Heart right ventricle (tissue), 16 donors: ENCODE measurements at regions of chr1 and their contacts with region 1.

Region 1: GRCh38 chr1:10253755-10254154 is 43.4 kb downstream of the KIF1B start:
- DNase-seq: peak in 1 of 2 donors; percentile 41
- ATAC-seq: peak; percentile 73 to 96 (median 90)
- H3K4me3 ChIP-seq: no peak overlapping the region
- H3K27ac ChIP-seq: peak overlapping the region; percentile 2 to 72 (median 54)
- H3K4me1 ChIP-seq: peaks cover 0 to 67% (median 56%) of the 10 kb centered on the region in 9 donors
- H3K27me3 ChIP-seq: no peaks in the 10 kb centered on the region
- CTCF ChIP-seq: no peak

Region 2: DNA sequence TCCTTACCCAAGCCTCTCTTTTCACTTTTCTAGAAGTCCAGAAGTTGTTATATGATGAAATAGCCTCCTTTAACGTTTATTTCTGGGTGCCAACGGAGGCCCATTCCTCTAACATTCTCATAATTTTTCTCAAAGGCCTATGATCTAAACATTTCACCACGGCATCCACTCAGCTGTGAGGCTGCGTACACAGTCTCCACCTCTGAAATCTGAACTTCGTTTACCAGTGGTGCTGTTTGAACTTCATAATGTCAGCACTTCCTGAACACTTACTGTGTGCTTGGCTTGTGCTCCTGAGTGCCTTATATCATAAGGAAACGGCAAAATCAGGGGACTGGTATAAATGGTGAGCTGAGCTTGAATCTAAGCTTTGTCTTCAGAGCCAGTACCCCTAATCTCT is 268.8 kb before region 1 on chr1:
- intact Hi-C with region 1: no loop called
- DNase-seq: no peak
- ATAC-seq: peak in 2 of 8 donors; percentile 18 to 48
- H3K4me3 ChIP-seq: no peak overlapping the region
- H3K27ac ChIP-seq: peak overlapping the region in 8 of 10 donors; percentile 40 to 75 (median 50)
- H3K4me1 ChIP-seq: peaks cover 0 to 16% (median 5%) of the 10 kb centered on the region in 9 donors
- H3K27me3 ChIP-seq: no peaks in the 10 kb centered on the region
- CTCF ChIP-seq: no peak

Region 3: DNA sequence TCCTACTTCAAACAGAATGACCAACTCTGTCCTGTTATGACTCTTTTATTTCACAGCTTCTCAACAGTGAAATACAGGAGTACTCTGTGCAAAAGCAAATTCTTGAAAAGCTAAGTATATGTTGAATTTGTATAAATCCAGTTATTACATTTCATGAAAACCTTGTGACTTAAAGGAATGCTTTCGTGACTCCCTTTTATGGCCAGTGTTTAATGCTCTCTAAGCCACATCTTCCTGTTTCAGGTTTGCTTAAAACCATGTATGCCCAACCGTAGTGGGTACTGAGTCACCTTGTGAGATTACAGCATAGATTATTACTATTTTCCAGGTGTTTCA is 83.5 kb before region 1 on chr1:
- intact Hi-C with region 1: no loop called
- DNase-seq: no peak
- ATAC-seq: no peak
- H3K4me3 ChIP-seq: no peak overlapping the region
- H3K27ac ChIP-seq: no peak overlapping the region
- H3K4me1 ChIP-seq: peaks cover 0 to 5% (median 0%) of the 10 kb centered on the region in 9 donors
- H3K27me3 ChIP-seq: no peaks in the 10 kb centered on the region
- CTCF ChIP-seq: no peak

Region 4: DNA sequence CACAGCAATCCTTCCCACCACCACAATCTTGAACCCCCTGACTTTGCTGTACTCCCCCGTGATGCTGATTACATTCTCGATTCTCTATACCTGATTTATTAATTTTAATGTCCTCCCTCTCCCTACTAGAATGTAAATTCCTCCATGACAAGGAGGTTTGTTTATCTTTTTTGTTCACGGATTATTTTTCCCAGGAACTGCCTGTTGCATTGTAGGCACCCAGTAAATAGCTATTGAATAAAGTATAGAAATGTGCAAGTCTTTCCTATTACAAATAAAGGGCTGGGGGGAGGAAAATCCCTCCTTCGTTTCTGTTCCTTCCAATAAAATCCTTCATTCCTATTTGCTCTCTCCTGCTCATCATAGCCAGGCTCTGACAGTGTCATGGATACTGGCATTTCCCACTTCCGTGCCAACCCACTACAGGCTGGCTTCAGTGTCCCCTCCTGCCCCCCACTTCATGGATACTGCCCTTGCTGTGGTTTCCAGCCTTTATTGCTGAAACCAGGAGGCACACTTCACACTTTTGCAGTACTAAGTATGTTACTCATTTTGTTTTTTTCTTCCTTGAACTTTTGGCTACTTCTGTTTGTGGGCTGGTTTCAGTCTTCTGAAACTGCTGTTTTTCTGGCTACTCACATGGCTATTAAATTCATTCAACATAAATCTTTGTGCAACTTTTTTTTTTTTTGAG is 35.9 kb before region 1 on chr1:
- intact Hi-C with region 1: loop called in 6 of 10 experiments (anchors 1 to 5 kb)
- DNase-seq: no peak
- ATAC-seq: peak in 4 of 8 donors; percentile 35 to 56 (median 43)
- H3K4me3 ChIP-seq: no peak overlapping the region
- H3K27ac ChIP-seq: peak overlapping the region in 5 of 10 donors; percentile 15 to 63 (median 49)
- H3K4me1 ChIP-seq: peaks cover 18 to 97% (median 70%) of the 10 kb centered on the region in 9 donors
- H3K27me3 ChIP-seq: no peaks in the 10 kb centered on the region
- CTCF ChIP-seq: no peak